ENCODE measurements at regions of chr15 and their contacts with region 1.

Region 1: GRCh38 chr15:90071208-90071807 is 31.0 kb downstream of the IDH2 start:
- DNase-seq: peak; percentile 81 to 88
- ATAC-seq: peak; percentile 61 to 74 (median 62)
- H3K4me3 ChIP-seq: no peak overlapping the region
- H3K27ac ChIP-seq: peak overlapping the region; percentile 85
- H3K4me1 ChIP-seq: peaks cover 22% of the 10 kb centered on the region
- H3K27me3 ChIP-seq: no peaks in the 10 kb centered on the region
- CTCF ChIP-seq: peak; percentile 86

Region 2: GRCh38 chr15:88491158-88491557 is 1580.2 kb before region 1 on chr15:
- intact Hi-C with region 1: no loop called
- DNase-seq: no peak
- ATAC-seq: no peak
- H3K4me3 ChIP-seq: no peak overlapping the region
- H3K27ac ChIP-seq: no peak overlapping the region
- H3K4me1 ChIP-seq: no peaks in the 10 kb centered on the region
- H3K27me3 ChIP-seq: no peaks in the 10 kb centered on the region
- CTCF ChIP-seq: no peak

Region 3: GRCh38 chr15:89893696-89894455 is 177.4 kb before region 1 on chr15 and contains the start of gene AP3S2:
- intact Hi-C with region 1: loop called in 1 of 2 experiments (anchors 5 kb)
- DNase-seq: peak; percentile 91 to 95
- ATAC-seq: peak; percentile 96 to 98 (median 98)
- H3K4me3 ChIP-seq: peak within 1 kb of the TSS; percentile 89
- H3K27ac ChIP-seq: peak within 1 kb of the TSS; percentile 88
- H3K4me1 ChIP-seq: peaks cover 14% of the 10 kb centered on the region
- H3K27me3 ChIP-seq: no peaks in the 10 kb centered on the region
- CTCF ChIP-seq: no peak
- total RNA-seq, gene AP3S2: 40.6 to 61.0 (median 46.6) TPM

Region 4: DNA sequence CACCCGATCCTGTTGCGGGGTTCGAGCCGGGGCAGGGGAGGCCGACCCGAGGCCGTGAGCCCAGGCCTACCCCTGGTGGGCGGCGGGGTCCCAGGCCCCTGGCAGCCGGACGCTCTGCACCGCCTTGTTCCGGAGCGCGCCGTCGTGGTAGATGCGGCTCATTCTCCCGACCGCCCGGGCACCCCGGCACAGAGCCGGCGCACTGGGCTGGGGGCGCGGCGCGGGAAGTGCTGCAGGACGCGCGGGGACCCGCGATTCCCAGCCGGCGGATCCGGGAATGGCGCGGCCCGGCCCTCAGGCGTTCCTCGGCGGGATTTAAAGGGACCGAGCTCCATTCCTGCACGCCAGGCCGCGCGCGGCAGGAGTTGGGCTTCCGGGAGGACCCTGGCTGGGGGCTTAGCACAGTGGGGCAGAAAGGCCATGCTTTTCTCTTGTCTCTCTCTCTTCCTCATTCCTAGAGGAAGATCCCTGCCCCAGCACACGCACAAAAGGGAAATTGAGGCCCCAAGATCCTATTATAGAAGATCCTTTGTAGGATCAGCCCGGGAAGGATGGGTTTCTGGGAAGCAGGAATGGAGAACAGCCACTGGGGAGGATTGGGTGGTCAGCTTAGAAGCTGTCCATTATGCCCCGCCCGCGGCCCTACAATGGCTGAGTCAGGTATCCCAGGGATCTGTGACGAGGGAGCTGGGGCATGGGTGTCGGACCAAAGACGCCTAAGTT is 158.5 kb before region 1 on chr15 and contains the start of gene ARPIN:
- intact Hi-C with region 1: loop called (anchors 5 kb)
- DNase-seq: peak; percentile 64 to 74
- ATAC-seq: peak; percentile 79 to 91 (median 84)
- H3K4me3 ChIP-seq: peak within 1 kb of the TSS; percentile 91
- H3K27ac ChIP-seq: peak within 1 kb of the TSS; percentile 63
- H3K4me1 ChIP-seq: peaks cover 6% of the 10 kb centered on the region
- H3K27me3 ChIP-seq: no peaks in the 10 kb centered on the region
- CTCF ChIP-seq: no peak
- total RNA-seq, gene ARPIN: 5.3 to 10.3 (median 9.7) TPM

Region 5: GRCh38 chr15:90001683-90002427 is 69.5 kb before region 1 on chr15:
- intact Hi-C with region 1: loop called (anchors 2 to 5 kb)
- DNase-seq: peak; percentile 76 to 81
- ATAC-seq: peak; percentile 41 to 54 (median 48)
- H3K4me3 ChIP-seq: peak overlapping the region; percentile 90
- H3K27ac ChIP-seq: peak overlapping the region; percentile 80
- H3K4me1 ChIP-seq: peaks cover 49% of the 10 kb centered on the region
- H3K27me3 ChIP-seq: no peaks in the 10 kb centered on the region
- CTCF ChIP-seq: no peak

Measured in psoas muscle (tissue), 8 donors.